Cardiac septum (tissue), 1 donor: ENCODE measurements at regions of chr13 and their contacts with region 1.

Region 1: GRCh38 chr13:75876360-75877050 is 240.4 kb downstream of the LMO7 start:
- DNase-seq: no peak

Region 2: GRCh38 chr13:75978818-75979217 is 102.3 kb after region 1 on chr13:
- intact Hi-C with region 1: no loop called
- DNase-seq: no peak

Region 3: GRCh38 chr13:76016799-76017400 is 140.4 kb after region 1 on chr13:
- intact Hi-C with region 1: loop called (anchors 2 kb)
- DNase-seq: no peak

Region 4: GRCh38 chr13:76210262-76210661 is 333.8 kb after region 1 on chr13:
- intact Hi-C with region 1: loop called (anchors 10 kb)
- DNase-seq: no peak

Region 5: GRCh38 chr13:76473552-76474134 is 597.1 kb after region 1 on chr13:
- intact Hi-C with region 1: loop called (anchors 2 kb)
- DNase-seq: peak; percentile 79

Region 6: GRCh38 chr13:76903544-76904162 is 1027.1 kb after region 1 on chr13:
- intact Hi-C with region 1: loop called (anchors 5 kb)
- DNase-seq: peak; percentile 73

Region 7: DNA sequence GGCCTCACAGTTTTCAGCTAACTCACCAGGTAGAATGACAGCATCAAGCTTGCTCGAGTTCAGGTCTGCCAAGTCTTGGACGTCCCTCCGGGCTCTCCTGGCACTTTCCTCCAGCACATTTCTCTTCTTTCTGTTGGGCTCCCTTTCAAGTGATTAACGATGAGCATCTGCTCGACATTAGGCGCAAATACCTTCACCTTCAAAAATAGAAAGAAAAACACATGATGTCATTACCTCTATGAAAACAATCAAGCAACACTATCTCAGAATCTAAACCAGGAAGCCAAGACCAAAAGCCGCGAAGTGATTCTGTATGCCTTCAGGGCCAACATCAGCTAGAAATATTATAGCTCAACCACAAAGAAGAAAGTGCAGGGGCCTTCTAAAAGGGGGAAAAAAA is 1100.0 kb after region 1 on chr13:
- intact Hi-C with region 1: loop called (anchors 10 kb)
- DNase-seq: no peak